ENCODE measurements at regions of chr12 and their contacts with region 1.

Region 1: DNA sequence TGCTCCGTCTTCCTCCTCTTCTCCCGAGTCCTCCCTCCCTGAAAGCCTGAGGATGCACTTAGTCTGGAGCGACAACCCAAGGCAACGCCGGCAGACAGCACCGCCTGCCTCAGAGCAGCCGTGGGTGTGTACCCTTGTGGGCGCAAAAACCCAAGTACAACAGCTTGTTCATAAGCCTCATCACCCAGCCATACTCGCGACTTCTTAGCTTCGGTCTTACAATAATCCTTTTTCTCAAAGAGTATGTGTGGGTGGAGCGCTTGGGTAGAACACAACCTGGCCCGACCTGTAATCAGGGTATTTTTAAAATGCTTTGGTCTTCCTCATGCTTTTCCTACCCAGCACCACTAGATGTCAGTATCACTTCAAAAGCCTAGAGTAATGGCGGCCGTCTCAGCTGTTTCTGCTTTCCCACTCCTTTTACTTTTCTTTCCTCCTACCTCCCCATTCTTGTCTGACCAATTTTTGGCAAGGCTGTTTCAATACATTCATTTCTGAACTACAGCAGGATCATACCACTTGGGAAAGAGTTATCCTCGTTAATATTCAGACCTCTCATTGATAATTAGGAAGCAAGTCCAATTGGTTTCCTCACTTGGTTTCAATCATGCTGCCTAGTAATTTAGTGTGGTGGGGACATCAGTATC is 198.9 kb downstream of the EPS8 start:
- DNase-seq: peak; percentile 70
- ATAC-seq: peak; percentile 92
- H3K4me3 ChIP-seq: peak overlapping the region; percentile 35 to 73 (median 57); a peak in 5 of 6 replicates
- H3K27ac ChIP-seq: no peak overlapping the region
- H3K4me1 ChIP-seq: peaks cover 24% of the 10 kb centered on the region
- H3K27me3 ChIP-seq: no peaks in the 10 kb centered on the region; a peak in 1 of 5 replicates
- CTCF ChIP-seq: peak; percentile 89
- EP300 ChIP-seq: no peak
- POLR2A ChIP-seq: no peak
- RAD21 ChIP-seq: peak; percentile 85

Region 2: GRCh38 chr12:15563663-15564062 is 26.6 kb before region 1 on chr12:
- CTCF ChIA-PET with region 1: no interaction called
- POLR2A ChIA-PET with region 1: no interaction called
- in situ Hi-C with region 1: no loop called
- intact Hi-C with region 1: no loop called
- DNase-seq: no peak
- ATAC-seq: no peak
- H3K4me3 ChIP-seq: no peak overlapping the region
- H3K27ac ChIP-seq: no peak overlapping the region
- H3K4me1 ChIP-seq: no peaks in the 10 kb centered on the region
- H3K27me3 ChIP-seq: peaks cover 0 to 25% of the 10 kb centered on the region in 2 experiments; a peak in 3 of 5 replicates
- CTCF ChIP-seq: no peak
- EP300 ChIP-seq: no peak
- POLR2A ChIP-seq: no peak
- RAD21 ChIP-seq: no peak

Region 3: GRCh38 chr12:15629108-15629507 is 38.8 kb after region 1 on chr12:
- CTCF ChIA-PET with region 1: no interaction called
- POLR2A ChIA-PET with region 1: no interaction called
- in situ Hi-C with region 1: no loop called
- intact Hi-C with region 1: loop called (anchors 5 kb)
- DNase-seq: peak; percentile 99
- ATAC-seq: peak; percentile 100
- H3K4me3 ChIP-seq: no peak overlapping the region
- H3K27ac ChIP-seq: peak overlapping the region; percentile 98
- H3K4me1 ChIP-seq: peaks cover 66% of the 10 kb centered on the region
- H3K27me3 ChIP-seq: no peaks in the 10 kb centered on the region
- CTCF ChIP-seq: no peak
- EP300 ChIP-seq: peak; percentile 53 to 90; a peak in 2 of 4 replicates
- POLR2A ChIP-seq: peak in 1 of 2 experiments; percentile 47; a peak in 2 of 4 replicates
- RAD21 ChIP-seq: peak; percentile 29; the same call in 1 of the 2 replicates

Region 4: GRCh38 chr12:15644700-15645099 is 54.4 kb after region 1 on chr12:
- CTCF ChIA-PET with region 1: no interaction called
- POLR2A ChIA-PET with region 1: no interaction called
- in situ Hi-C with region 1: no loop called
- intact Hi-C with region 1: loop called (anchors 5 kb)
- DNase-seq: no peak
- ATAC-seq: no peak
- H3K4me3 ChIP-seq: no peak overlapping the region
- H3K27ac ChIP-seq: no peak overlapping the region
- H3K4me1 ChIP-seq: no peaks in the 10 kb centered on the region
- H3K27me3 ChIP-seq: no peaks in the 10 kb centered on the region
- CTCF ChIP-seq: no peak
- EP300 ChIP-seq: no peak
- POLR2A ChIP-seq: no peak
- RAD21 ChIP-seq: no peak

Region 5: GRCh38 chr12:15712823-15713660 is 122.7 kb after region 1 on chr12:
- CTCF ChIA-PET with region 1: no interaction called
- POLR2A ChIA-PET with region 1: no interaction called
- in situ Hi-C with region 1: no loop called
- intact Hi-C with region 1: loop called (anchors 5 kb)
- DNase-seq: peak; percentile 86
- ATAC-seq: peak; percentile 94
- H3K4me3 ChIP-seq: peak overlapping the region; percentile 59 to 66 (median 59); a peak in 5 of 6 replicates
- H3K27ac ChIP-seq: peak overlapping the region; percentile 84
- H3K4me1 ChIP-seq: peaks cover 64% of the 10 kb centered on the region
- H3K27me3 ChIP-seq: no peaks in the 10 kb centered on the region
- CTCF ChIP-seq: no peak
- EP300 ChIP-seq: peak in 1 of 2 experiments; percentile 49; a peak in 1 of 4 replicates
- POLR2A ChIP-seq: no peak
- RAD21 ChIP-seq: no peak

Region 6: DNA sequence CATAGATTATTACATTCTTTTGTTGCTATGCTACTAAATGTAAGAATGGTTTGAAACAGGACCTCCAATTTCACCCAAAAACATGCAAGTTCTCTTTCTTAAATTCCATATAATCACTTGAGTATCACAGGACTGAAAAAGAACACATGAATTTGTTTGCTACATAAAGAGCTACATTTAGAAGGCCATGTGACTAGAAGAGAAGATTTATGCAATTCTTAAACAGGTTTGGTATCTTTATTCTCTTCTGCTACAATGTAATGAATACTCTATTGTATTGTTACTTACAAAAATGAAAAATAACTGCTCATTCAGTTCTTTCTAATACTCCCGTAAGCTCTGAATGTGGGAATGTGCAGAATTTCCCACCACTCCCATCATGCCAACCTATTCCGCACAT is 189.6 kb after region 1 on chr12:
- CTCF ChIA-PET with region 1: no interaction called
- POLR2A ChIA-PET with region 1: interaction called, 4 read pairs
- in situ Hi-C with region 1: no loop called
- intact Hi-C with region 1: loop called (anchors 2 kb)
- DNase-seq: no peak
- ATAC-seq: no peak
- H3K4me3 ChIP-seq: no peak overlapping the region
- H3K27ac ChIP-seq: peak overlapping the region; percentile 56
- H3K4me1 ChIP-seq: peaks cover 76% of the 10 kb centered on the region
- H3K27me3 ChIP-seq: no peaks in the 10 kb centered on the region
- CTCF ChIP-seq: no peak
- EP300 ChIP-seq: no peak
- POLR2A ChIP-seq: no peak
- RAD21 ChIP-seq: no peak